Astrocyte of the cerebellum (primary cell): ENCODE measurements at regions of chr2 and their contacts with region 1.

Region 1: DNA sequence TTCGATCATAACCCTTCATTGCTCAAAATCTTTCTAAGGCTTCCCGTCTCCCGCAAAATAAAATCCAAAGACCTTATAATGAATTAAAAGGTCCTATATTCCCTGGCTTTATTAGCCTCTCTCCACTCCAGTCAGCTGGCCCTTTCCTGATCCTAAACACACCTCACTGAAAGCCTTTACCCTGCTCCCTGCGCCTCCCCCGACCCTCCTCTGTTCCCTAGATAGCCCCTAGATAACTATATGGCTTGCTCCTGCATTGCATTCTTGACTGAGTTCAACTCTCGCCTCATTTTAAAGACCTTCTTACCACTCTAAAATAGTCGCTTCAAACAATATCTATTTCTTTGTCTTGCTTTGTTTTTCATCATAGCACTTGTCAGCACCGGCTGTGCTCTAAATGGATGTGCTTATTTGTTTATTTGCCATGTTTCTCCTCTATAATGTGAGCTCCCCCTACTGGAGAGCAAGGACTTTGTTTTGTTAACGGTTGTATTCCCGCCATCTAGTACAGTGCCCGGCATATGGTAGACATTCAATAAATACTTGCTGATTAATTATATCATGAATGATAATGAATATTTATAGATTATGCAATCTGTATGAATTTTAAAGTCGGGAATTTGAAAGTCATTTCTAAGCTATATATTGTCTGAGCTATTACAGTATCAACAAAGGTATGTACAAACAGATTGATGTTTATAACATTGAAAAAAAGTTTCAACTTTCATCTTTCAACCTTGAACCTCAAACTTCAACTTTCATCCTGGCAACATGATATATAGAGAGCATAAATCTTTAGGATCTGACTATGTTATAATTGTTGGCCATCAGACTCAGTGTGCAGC is 32.4 kb upstream of the VIT start:
- DNase-seq: peak; percentile 62
- H3K4me3 ChIP-seq: no peak overlapping the region
- CTCF ChIP-seq: peak; percentile 71

Region 2: GRCh38 chr2:36329746-36330472 is 334.2 kb before region 1 on chr2:
- in situ Hi-C with region 1: loop called (anchors 25 kb)
- DNase-seq: peak; percentile 29
- H3K4me3 ChIP-seq: no peak overlapping the region
- CTCF ChIP-seq: no peak

Region 3: DNA sequence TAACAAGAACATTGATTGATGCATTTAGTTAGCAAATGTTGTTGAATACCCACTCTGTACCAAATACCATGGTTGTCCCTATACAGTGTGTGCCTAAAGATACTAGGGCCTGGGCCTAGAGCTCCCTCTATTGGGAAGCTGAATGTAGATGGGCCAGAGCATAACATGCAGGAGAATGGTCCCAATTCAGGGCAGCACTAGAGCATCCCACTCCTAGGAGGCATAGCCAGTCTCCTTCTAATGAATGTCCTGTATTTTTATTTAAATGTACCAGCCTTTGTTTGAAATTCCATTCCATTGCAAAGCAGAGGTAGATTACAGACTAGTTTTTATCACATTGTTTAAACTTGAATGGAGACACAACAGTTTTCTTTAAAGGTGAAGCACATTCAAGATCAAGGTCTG is 156.7 kb before region 1 on chr2:
- in situ Hi-C with region 1: loop called (anchors 25 kb)
- DNase-seq: peak; percentile 55
- H3K4me3 ChIP-seq: no peak overlapping the region
- CTCF ChIP-seq: peak; percentile 98

Region 4: DNA sequence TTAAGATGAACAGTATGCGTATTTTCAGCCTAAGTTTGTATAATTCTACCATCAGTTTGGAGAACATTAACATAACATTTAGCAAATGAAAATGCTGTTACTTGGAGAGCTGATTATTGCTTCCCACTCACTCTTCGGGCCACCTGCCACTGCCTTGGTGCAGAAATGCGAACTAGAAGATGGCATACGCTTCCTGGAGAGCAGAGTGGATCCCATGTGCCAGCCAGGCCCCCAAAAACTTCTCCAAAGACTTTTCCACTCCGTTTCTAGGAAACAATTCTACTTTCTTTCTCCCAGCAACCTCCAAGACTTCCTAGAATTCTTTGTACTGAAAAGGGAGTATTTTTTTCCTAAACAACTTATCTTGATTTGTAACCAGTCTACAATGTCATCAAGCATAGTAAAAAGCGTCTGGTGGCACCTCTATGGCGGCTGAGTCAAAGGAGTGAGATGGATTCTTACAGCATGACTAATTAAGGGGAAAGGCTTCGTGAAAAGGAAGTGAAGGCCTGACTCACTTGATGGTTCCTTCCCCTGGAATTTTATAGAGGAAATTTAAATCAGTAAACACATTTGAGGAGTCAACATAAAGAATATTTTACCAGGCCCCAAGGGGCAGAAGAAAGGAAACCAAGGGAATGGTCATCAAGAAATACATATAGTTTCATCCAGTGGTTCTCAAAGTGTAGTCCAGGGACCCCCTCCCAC is 102.7 kb before region 1 on chr2:
- in situ Hi-C with region 1: no loop called
- DNase-seq: peak; percentile 49
- H3K4me3 ChIP-seq: no peak overlapping the region
- CTCF ChIP-seq: no peak